ENCODE measurements at regions of chrX and their contacts with region 1.

Region 1: GRCh38 chrX:72306851-72307645 is 1.3 kb upstream of the CITED1 start:
- DNase-seq: peak; percentile 68
- H3K4me3 Mint-ChIP-seq: peak overlapping the region; percentile 86
- H3K27ac Mint-ChIP-seq: peak overlapping the region; percentile 76
- H3K4me1 Mint-ChIP-seq: peaks cover 21% of the 10 kb centered on the region
- H3K27me3 Mint-ChIP-seq: peaks cover 58% of the 10 kb centered on the region

Region 2: DNA sequence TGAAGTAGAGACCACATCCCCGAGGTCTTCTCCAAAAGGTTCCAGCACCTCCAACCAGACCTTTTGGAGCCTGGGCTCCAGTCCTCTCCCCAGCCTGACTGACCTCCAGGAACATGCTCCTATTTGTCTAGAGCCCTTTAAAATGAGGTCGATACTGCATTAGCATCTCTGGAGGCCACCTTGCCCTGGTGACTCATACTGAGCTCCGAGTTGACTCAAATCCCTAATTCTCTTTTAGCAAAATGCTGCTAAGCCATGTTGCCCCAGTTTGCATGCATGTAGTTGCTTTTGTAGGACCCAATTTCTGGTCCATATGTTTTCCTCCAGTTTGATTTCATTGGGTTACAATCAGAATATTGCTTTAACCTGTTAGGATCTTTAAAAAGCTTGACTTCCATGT is 42.1 kb after region 1 on chrX:
- intact Hi-C with region 1: loop called (anchors 5 kb)
- DNase-seq: peak; percentile 51
- H3K4me3 Mint-ChIP-seq: peak overlapping the region; percentile 72
- H3K27ac Mint-ChIP-seq: peak overlapping the region; percentile 85
- H3K4me1 Mint-ChIP-seq: peaks cover 19% of the 10 kb centered on the region
- H3K27me3 Mint-ChIP-seq: no peaks in the 10 kb centered on the region

Region 3: DNA sequence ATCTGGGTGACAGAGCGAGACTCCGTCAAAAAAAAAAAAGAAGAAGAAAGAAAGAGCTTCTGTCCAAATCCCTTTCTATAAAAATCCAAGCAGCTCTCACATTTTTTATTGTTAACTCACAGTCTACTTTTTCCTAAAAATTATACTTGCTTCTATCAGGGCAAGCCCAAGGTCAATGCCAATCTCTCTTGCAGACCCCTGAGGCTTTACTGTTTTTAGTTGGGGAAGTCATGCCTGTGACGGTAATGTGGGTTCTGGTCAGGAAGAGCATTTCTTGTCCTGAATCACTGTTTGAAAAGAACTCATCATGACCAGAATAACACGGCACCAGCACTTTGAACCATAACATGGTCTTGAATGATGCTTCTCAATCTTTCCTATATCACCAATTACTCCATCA is 53.3 kb after region 1 on chrX:
- intact Hi-C with region 1: no loop called
- DNase-seq: no peak
- H3K4me3 Mint-ChIP-seq: no peak overlapping the region
- H3K27ac Mint-ChIP-seq: no peak overlapping the region
- H3K4me1 Mint-ChIP-seq: no peaks in the 10 kb centered on the region
- H3K27me3 Mint-ChIP-seq: no peaks in the 10 kb centered on the region

Region 4: DNA sequence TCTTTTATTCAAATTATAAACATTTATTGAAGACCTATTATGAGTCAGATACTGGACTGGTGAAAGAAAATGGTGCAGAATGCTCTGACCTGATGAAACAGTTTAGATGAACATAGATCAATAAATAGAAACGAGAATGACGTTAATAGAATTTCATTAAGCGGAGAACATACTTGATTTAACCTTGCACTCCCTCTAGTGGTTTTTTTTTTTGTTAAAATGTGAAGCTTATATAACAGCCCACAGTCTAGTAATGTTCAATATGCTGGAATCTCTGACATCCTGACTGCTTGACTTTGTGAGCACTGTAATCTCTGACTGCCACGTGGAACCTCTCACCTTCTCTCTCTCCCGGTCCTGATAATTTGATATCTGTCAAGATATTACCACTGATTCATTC is 233.3 kb after region 1 on chrX:
- intact Hi-C with region 1: loop called (anchors 5 kb)
- DNase-seq: no peak
- H3K4me3 Mint-ChIP-seq: no peak overlapping the region
- H3K27ac Mint-ChIP-seq: no peak overlapping the region
- H3K4me1 Mint-ChIP-seq: peaks cover 1% of the 10 kb centered on the region
- H3K27me3 Mint-ChIP-seq: no peaks in the 10 kb centered on the region

Region 5: DNA sequence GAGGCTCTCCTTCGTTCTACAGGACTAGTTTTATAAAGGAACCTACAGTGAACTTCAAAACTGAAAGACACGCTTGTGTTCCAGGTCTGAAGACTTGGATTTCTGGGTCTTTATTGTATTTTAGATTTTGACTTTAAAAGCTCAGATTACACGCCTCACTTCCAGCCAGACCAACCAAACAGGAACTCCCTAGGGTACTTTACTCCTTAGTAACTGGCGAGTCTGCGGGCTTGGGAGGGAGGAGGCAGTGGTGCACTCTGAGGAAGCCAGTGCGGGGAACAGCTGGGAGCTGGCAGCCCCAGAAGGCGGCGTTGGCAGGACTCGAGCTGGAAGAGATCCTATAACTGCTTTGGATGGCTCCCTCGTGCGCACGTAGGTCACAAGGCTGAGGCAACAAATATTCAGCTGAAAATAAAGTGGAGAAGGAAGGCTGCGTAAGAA is 407.4 kb after region 1 on chrX:
- intact Hi-C with region 1: loop called (anchors 2 kb)
- DNase-seq: peak; percentile 53
- H3K4me3 Mint-ChIP-seq: peak overlapping the region; percentile 80
- H3K27ac Mint-ChIP-seq: peak overlapping the region; percentile 80
- H3K4me1 Mint-ChIP-seq: peaks cover 11% of the 10 kb centered on the region
- H3K27me3 Mint-ChIP-seq: peaks cover 5% of the 10 kb centered on the region